Psoas muscle (tissue), 8 donors: ENCODE measurements at regions of chr3 and their contacts with region 1.

Region 1: DNA sequence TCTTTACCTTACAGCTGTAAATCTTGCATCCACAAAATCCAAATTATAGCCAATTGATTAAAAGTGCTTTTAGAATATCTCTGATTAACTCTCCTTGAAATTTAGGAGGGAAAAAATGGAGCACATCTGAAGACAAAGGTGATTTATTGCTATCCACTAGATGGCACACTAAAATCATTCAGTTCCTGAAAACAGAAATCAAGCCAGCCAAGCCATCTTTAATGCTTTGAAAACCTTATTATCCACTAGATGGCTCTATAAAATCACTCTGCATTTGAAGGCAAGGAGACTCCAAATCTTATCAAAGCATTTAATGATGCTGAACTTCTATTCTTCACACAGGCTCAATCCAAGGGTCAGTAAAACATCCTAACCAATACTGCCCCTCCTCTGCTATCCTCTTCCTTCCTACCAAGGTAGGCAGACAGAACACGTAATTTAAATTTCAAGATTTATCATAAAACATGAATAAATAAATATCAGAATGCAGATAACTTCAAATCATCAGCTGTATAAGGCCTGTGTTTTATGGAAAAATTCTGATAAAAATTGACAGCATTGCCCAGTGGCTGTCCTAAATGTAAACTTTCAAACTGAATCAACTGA is 48.4 kb downstream of the GOLIM4 start:
- DNase-seq: no peak
- ATAC-seq: peak; percentile 73 to 84 (median 80)
- H3K4me3 ChIP-seq: no peak overlapping the region
- H3K27ac ChIP-seq: no peak overlapping the region
- H3K4me1 ChIP-seq: peaks cover 24% of the 10 kb centered on the region
- H3K27me3 ChIP-seq: no peaks in the 10 kb centered on the region
- CTCF ChIP-seq: peak; percentile 87

Region 2: DNA sequence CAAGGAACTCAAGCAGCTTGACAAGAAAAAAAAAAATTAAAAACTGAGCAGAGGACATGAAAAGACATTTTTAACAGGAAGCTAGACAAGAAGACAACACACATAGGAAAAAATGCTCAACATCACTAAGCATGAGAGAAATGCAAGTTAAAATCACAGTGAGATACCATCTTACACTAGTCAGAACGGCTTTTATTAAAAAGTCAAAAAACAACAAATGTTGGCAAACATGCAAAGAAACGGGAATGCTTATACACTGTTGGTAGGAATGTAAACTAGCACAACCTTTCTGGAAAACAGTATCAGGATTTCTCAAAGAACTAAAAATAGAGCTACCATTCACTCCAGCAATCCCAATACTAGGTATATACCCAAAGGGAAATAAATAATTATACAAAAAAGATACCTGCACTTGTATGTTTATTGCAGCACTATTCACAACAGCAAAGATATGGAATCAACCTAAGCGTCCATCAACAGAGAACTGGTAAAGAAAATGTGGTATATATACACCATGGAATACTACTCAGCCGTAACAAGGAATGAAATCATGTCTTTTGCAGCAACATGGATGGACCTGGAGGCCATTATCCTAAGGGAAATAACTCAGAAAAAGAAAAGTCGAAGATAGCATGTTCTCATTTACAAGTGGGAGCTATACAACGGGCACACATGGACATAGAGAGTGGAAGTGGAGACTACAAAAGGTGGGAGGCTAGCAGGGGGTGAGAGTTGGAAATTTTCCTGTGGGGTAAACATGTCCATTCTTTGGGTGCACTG is 43.2 kb after region 1 on chr3:
- intact Hi-C with region 1: loop called in 1 of 2 experiments (anchors 1 kb)
- DNase-seq: no peak
- ATAC-seq: no peak
- H3K4me3 ChIP-seq: no peak overlapping the region
- H3K27ac ChIP-seq: no peak overlapping the region
- H3K4me1 ChIP-seq: peaks cover 45% of the 10 kb centered on the region
- H3K27me3 ChIP-seq: no peaks in the 10 kb centered on the region
- CTCF ChIP-seq: no peak

Region 3: DNA sequence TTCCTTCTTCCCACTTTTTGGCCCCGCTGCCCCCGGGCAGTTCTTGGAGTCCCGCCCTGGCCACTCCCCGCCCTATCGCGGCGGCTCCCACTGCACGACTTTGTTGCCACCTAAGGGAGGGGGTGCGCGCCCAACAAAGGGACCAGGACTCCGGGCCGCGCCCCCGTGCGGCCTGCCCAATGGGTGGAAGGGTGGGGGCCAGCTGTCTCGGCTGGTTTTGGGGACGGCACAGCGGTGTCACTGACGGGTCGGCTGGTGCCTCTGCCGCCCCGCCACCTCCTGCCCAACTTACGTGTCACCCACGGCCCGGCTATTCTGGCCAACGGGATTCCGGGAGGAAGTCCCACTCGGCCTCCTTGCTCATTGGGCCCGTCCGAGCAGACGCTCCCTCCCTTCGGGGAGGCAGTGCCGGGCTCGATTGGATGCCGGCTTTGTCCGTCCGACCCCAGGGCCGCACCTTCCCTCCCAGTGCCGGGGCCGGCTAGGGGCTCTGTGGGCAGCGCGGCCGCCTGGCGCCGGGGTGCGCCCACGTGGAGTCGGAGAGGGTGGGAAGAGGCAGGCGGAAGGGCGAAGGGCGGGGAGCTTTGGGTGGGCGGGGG is 48.4 kb after region 1 on chr3 and contains the start of gene GOLIM4:
- intact Hi-C with region 1: loop called in 1 of 2 experiments (anchors 1 kb)
- DNase-seq: peak; percentile 96 to 97
- ATAC-seq: peak; percentile 94 to 95 (median 94)
- H3K4me3 ChIP-seq: peak within 1 kb of the TSS; percentile 92
- H3K27ac ChIP-seq: peak within 1 kb of the TSS; percentile 95
- H3K4me1 ChIP-seq: peaks cover 30% of the 10 kb centered on the region
- H3K27me3 ChIP-seq: no peaks in the 10 kb centered on the region
- CTCF ChIP-seq: peak; percentile 6
- total RNA-seq, gene GOLIM4: 13.4 to 34.1 (median 25.2) TPM

Region 4: GRCh38 chr3:168165390-168166269 is 118.3 kb after region 1 on chr3:
- intact Hi-C with region 1: loop called (anchors 1 to 2 kb)
- DNase-seq: peak in 1 of 2 donors; percentile 25
- ATAC-seq: peak; percentile 58 to 95 (median 76)
- H3K4me3 ChIP-seq: peak overlapping the region; percentile 39
- H3K27ac ChIP-seq: no peak overlapping the region
- H3K4me1 ChIP-seq: peaks cover 5% of the 10 kb centered on the region
- H3K27me3 ChIP-seq: no peaks in the 10 kb centered on the region
- CTCF ChIP-seq: peak; percentile 78